ENCODE measurements at regions of chr14 and their contacts with region 1.

Region 1: DNA sequence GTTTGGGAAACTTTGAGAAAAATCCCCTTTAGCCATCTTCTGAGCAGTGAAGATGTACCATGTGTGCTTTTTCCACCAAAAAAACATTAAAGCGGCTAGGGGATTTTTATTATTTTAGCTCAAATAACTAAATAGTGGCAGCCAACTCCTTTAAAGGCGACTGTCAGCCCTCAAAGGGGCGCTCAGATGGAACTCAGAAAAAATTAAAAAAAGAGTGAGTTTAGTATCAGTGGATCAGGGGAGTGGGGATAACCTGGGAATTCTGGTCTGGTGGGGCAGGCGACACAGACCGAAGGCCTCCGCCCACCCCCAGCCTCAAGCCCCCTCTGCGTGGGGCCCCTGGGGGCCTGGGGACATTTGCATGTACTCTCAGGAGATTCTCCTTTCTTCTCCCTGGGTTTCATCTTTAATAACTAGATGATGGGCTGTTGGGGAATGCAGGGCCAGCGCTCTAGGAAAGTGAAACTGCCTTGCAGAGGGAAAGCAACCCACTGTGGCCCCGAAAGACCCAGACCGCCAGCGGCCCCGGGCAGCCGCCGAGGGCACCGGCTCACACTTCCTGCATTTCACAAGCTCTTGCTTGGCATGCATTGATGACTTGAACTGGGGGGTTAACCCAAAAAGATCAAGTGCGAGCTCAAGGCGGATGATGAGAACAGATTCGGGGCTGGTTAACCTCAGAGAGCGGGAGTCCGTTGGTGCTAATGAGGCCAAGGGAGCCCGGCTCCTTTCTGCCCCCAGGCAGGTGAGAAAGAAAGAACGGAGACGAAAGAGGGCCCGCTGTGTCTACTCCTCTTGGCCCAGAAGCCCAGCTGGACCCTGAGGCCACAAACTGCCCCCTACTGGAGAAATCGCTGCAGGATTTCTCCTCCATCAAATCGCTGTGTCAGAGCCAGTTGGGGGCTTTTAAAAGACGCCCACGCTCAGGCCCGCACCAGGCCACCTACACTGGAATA is 7.3 kb upstream of the BATF start:
- DNase-seq: peak; percentile 66
- ATAC-seq: peak; percentile 67
- H3K4me3 Mint-ChIP-seq: peak overlapping the region; percentile 68
- H3K27ac Mint-ChIP-seq: peak overlapping the region; percentile 93
- H3K4me1 Mint-ChIP-seq: peaks cover 42% of the 10 kb centered on the region
- H3K27me3 Mint-ChIP-seq: no peaks in the 10 kb centered on the region
- CTCF ChIP-seq: peak; percentile 51

Region 2: GRCh38 chr14:75002392-75003249 is 512.3 kb before region 1 on chr14 and contains the start of gene EIF2B2:
- CTCF ChIA-PET with region 1: no interaction called
- POLR2A ChIA-PET with region 1: no interaction called
- intact Hi-C with region 1: no loop called
- DNase-seq: peak; percentile 99
- ATAC-seq: peak; percentile 98
- H3K4me3 Mint-ChIP-seq: peak within 1 kb of the TSS; percentile 94
- H3K27ac Mint-ChIP-seq: peak within 1 kb of the TSS; percentile 95
- H3K4me1 Mint-ChIP-seq: peaks cover 35% of the 10 kb centered on the region
- H3K27me3 Mint-ChIP-seq: no peaks in the 10 kb centered on the region
- CTCF ChIP-seq: peak; percentile 18
- total RNA-seq, gene EIF2B2: 50.5 to 51.9 TPM

Region 3: DNA sequence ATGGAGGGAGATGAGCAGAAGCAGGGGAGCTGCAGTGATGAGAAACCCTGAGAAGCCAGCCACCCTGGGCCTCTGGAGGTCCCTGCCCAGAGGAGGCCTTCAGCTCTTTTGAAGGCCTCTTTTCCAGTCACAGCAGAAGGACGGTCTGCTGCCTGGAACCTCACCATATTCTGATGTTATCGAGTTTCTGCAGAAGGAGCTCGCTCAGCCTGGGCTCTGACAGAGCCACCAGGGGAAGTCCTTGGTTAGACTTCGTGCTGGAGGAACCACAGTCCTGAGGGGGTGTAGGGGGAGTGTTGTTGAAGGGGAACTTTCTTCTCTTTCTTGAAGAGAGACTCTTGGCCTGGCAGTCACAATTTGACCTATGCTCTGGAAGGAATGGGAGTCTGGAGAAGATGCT is 17.8 kb before region 1 on chr14:
- CTCF ChIA-PET with region 1: interaction called, 19 read pairs
- POLR2A ChIA-PET with region 1: interaction called, 4 read pairs
- intact Hi-C with region 1: no loop called
- DNase-seq: peak; percentile 75
- ATAC-seq: peak; percentile 83
- H3K4me3 Mint-ChIP-seq: peak overlapping the region; percentile 14
- H3K27ac Mint-ChIP-seq: peak overlapping the region; percentile 80
- H3K4me1 Mint-ChIP-seq: peaks cover 59% of the 10 kb centered on the region
- H3K27me3 Mint-ChIP-seq: no peaks in the 10 kb centered on the region
- CTCF ChIP-seq: no peak